ENCODE measurements at regions of chr3 and their contacts with region 1.

Region 1: GRCh38 chr3:102544741-102545140 is 109.9 kb downstream of the ZPLD1 start:
- DNase-seq: no peak
- H3K4me3 ChIP-seq: no peak overlapping the region
- H3K27ac ChIP-seq: no peak overlapping the region
- H3K4me1 ChIP-seq: no peaks in the 10 kb centered on the region
- H3K27me3 ChIP-seq: no peaks in the 10 kb centered on the region
- CTCF ChIP-seq: no peak

Region 2: DNA sequence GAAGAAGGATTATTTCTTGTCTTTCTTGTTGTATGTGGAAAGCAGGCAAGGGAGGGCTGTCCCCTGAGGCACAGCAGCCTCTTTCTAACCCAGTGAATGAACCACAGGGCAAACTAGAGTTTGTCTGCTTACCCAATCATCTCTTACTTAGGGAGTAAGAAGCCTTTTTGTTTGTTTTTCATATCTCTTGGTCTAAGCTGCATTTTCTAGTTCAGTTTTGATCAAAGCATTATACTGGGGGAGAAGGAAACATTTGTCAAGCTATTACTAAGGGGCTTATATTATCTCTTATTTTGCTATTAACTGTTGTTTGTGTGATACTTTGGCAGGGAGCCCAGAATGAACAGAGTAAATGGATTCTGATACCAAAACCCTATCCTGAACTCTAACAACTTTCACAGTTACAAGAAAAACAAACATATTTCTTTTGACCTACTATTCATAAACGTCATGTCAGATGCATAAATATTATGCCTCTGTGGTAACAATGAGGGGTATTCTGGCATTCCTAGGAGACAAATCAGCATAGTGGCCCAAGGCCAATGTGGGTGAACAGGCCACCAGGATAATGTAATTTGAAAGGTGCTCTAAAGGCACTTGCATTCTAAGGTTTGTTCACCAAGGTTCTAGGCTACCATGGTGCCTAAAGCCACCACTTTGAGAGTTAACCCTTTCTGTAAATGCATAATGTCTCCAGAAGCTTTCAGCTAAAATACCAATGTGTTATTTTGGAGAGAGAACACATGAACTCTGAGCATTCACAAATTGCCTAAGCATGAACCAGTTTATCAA is 381.5 kb before region 1 on chr3:
- CTCF ChIA-PET with region 1: no interaction called
- POLR2A ChIA-PET with region 1: no interaction called
- intact Hi-C with region 1: no loop called
- DNase-seq: peak; percentile 84 to 100
- H3K4me3 ChIP-seq: peak overlapping the region; percentile 7; the same call in 1 of the 2 replicates
- H3K27ac ChIP-seq: peak overlapping the region; percentile 87
- H3K4me1 ChIP-seq: peaks cover 59% of the 10 kb centered on the region
- H3K27me3 ChIP-seq: no peaks in the 10 kb centered on the region
- CTCF ChIP-seq: no peak

Region 3: GRCh38 chr3:102206511-102207031 is 338.2 kb before region 1 on chr3:
- CTCF ChIA-PET with region 1: no interaction called
- POLR2A ChIA-PET with region 1: no interaction called
- intact Hi-C with region 1: no loop called
- DNase-seq: no peak
- H3K4me3 ChIP-seq: no peak overlapping the region
- H3K27ac ChIP-seq: no peak overlapping the region
- H3K4me1 ChIP-seq: no peaks in the 10 kb centered on the region
- H3K27me3 ChIP-seq: no peaks in the 10 kb centered on the region
- CTCF ChIP-seq: no peak

Region 4: DNA sequence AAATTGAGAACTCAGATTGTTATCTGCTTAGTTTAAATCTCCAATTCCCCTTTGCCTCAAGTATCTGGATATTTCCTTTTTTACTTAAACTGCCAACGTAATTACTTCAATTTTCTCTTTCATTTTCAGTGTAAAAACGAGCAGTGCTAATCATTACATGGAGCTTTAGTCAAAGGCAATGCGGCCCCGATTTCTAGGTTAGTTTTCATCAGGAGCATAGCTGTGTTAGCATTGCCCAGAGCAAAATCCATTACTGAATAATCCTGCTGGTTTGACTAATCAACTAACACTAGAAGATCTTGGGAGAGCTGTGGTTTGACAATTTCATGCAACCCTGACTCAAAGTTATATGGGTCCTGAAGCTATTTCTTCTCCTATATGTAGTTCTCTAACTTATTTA is 63.7 kb before region 1 on chr3:
- CTCF ChIA-PET with region 1: no interaction called
- POLR2A ChIA-PET with region 1: no interaction called
- intact Hi-C with region 1: no loop called
- DNase-seq: no peak
- H3K4me3 ChIP-seq: no peak overlapping the region
- H3K27ac ChIP-seq: no peak overlapping the region
- H3K4me1 ChIP-seq: peaks cover 6% of the 10 kb centered on the region; the same call in 1 of the 2 replicates
- H3K27me3 ChIP-seq: no peaks in the 10 kb centered on the region
- CTCF ChIP-seq: no peak

Region 5: GRCh38 chr3:102577091-102577789 is 32.5 kb after region 1 on chr3:
- CTCF ChIA-PET with region 1: no interaction called
- POLR2A ChIA-PET with region 1: interaction called, 13 read pairs
- intact Hi-C with region 1: no loop called
- DNase-seq: no peak
- H3K4me3 ChIP-seq: no peak overlapping the region
- H3K27ac ChIP-seq: no peak overlapping the region
- H3K4me1 ChIP-seq: no peaks in the 10 kb centered on the region
- H3K27me3 ChIP-seq: no peaks in the 10 kb centered on the region
- CTCF ChIP-seq: no peak

Region 6: GRCh38 chr3:102630531-102630930 is 85.8 kb after region 1 on chr3:
- CTCF ChIA-PET with region 1: no interaction called
- POLR2A ChIA-PET with region 1: no interaction called
- intact Hi-C with region 1: no loop called
- DNase-seq: no peak
- H3K4me3 ChIP-seq: no peak overlapping the region
- H3K27ac ChIP-seq: no peak overlapping the region
- H3K4me1 ChIP-seq: no peaks in the 10 kb centered on the region
- H3K27me3 ChIP-seq: no peaks in the 10 kb centered on the region
- CTCF ChIP-seq: no peak

Region 7: GRCh38 chr3:102745882-102746281 is 201.1 kb after region 1 on chr3:
- CTCF ChIA-PET with region 1: no interaction called
- POLR2A ChIA-PET with region 1: no interaction called
- intact Hi-C with region 1: loop called (anchors 10 kb)
- DNase-seq: no peak
- H3K4me3 ChIP-seq: no peak overlapping the region
- H3K27ac ChIP-seq: no peak overlapping the region
- H3K4me1 ChIP-seq: no peaks in the 10 kb centered on the region
- H3K27me3 ChIP-seq: no peaks in the 10 kb centered on the region
- CTCF ChIP-seq: peak; percentile 48; the same call in 1 of the 2 replicates

Region 8: GRCh38 chr3:103919327-103919726 is 1374.6 kb after region 1 on chr3:
- CTCF ChIA-PET with region 1: no interaction called
- POLR2A ChIA-PET with region 1: interaction called, 14 read pairs
- intact Hi-C with region 1: no loop called
- DNase-seq: no peak
- H3K4me3 ChIP-seq: no peak overlapping the region
- H3K27ac ChIP-seq: no peak overlapping the region
- H3K4me1 ChIP-seq: no peaks in the 10 kb centered on the region
- H3K27me3 ChIP-seq: no peaks in the 10 kb centered on the region
- CTCF ChIP-seq: no peak; the same call in 1 of the 2 replicates

Measured in PC-9 (cell line).